Activated naive CD4-positive, alpha-beta T cell treated with anti-CD3 and anti-CD28 coated beads for 36 hours (primary cell): ENCODE measurements at regions of chr19 and their contacts with region 1.

Region 1: DNA sequence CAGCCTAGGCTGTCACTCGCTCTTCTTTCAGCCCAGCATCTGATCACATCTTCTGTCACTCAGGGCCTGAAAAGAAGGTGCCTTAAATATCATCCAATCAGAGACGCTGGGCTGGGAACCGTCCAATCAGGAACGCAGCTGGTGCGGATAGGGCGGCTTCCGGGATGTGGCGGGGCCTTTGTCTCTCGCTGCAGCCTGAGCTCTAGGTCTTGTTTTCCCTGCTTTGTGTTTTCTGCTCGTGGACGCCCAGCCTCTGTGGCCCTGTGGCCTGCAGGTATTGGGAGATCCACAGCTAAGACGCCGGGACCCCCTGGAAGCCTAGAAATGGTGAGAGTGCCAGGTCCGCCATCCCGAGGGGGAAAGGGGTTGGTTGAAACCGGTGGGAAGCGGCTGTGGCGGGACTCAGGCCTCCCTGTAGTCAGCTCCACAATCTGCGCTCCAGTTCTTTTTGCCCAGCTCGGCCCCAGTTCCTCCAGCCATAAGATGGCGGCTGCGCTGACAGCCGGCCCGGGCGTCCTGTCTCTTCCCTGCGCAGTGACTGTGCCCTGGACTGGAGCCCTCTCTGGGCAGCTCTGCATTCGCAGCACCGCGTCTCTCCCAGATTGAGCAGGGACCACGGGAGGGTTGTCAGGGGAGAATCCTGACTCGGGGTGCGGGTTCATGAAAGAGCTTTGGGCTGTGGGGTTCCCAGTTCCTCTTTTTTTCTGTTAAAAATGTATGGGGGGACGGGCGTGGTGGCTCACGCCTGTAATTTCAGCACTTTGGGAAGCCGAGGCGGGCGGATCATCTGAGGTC is at the start of gene ZNF85:
- DNase-seq: peak; percentile 96
- H3K4me3 Mint-ChIP-seq: peak within 1 kb of the TSS; percentile 97
- H3K27ac Mint-ChIP-seq: peak within 1 kb of the TSS; percentile 94
- H3K4me1 Mint-ChIP-seq: peaks cover 17% of the 10 kb centered on the region
- H3K27me3 Mint-ChIP-seq: no peaks in the 10 kb centered on the region
- total RNA-seq, gene ZNF85: 12.8 to 15.1 TPM

Region 2: GRCh38 chr19:20039203-20039723 is 884.0 kb before region 1 on chr19 and contains the start of gene ZNF682:
- CTCF ChIA-PET with region 1: no interaction called
- intact Hi-C with region 1: loop called (anchors 5 kb)
- DNase-seq: peak; percentile 98
- H3K4me3 Mint-ChIP-seq: peak within 1 kb of the TSS; percentile 94
- H3K27ac Mint-ChIP-seq: peak within 1 kb of the TSS; percentile 90
- H3K4me1 Mint-ChIP-seq: peaks cover 15% of the 10 kb centered on the region
- H3K27me3 Mint-ChIP-seq: no peaks in the 10 kb centered on the region
- total RNA-seq, gene ZNF682: 8.1 to 8.9 TPM

Region 3: GRCh38 chr19:20423381-20424197 is 499.7 kb before region 1 on chr19:
- CTCF ChIA-PET with region 1: no interaction called
- intact Hi-C with region 1: loop called (anchors 2 kb)
- DNase-seq: peak; percentile 59
- H3K4me3 Mint-ChIP-seq: peak overlapping the region; percentile 94
- H3K27ac Mint-ChIP-seq: peak overlapping the region; percentile 98
- H3K4me1 Mint-ChIP-seq: peaks cover 10% of the 10 kb centered on the region
- H3K27me3 Mint-ChIP-seq: no peaks in the 10 kb centered on the region

Region 4: DNA sequence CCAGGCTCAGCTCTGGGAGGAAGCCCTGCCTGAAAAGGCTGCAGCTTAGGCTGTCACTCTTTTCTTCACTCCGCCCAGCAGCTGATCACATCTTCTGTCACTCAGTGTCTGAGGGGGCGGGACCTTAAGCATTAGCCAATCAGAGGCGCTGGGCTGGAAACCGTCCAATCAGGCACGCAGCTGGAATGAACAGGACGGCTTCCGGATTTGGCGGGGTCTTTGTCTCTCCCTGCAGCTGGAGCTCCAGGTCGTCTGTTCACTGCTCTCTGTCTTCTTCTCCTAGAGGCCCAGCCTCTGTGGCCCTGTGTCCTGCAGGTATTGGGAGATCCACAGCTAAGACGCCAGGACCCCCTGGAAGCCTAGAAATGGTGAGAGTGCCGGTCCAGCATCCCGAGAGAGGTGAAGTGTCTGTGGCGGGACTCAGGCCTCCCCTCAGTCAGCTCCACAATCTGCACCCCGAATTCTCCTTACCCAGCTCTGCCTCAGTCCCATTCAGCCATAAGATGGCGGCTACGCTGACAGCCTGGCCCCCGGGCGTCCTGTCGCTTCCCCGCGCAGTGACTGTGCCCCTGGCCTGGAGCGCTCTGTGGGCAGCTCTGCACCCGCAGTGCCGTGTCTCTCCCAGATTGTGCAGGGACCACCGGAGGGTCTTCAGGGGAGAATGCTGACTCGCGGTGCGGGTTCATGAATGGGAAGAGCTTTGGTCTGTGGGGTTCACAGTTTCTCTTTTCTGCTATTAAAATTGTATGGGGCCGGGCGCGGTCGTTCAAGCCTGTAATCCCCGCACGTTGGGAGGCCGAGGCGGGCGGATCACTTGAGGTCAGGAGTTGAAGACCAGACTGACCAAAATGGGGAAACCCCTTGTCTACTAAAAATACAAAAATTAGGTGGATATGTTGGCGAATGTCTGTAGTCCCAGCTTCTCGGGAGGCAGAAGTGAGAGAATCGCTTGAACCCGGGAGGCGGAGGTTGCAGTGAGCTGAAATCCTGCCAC is 146.9 kb before region 1 on chr19 and contains the start of gene ZNF66:
- CTCF ChIA-PET with region 1: interaction called, 3 read pairs
- intact Hi-C with region 1: loop called (anchors 1 kb)
- DNase-seq: peak; percentile 98
- H3K4me3 Mint-ChIP-seq: peak within 1 kb of the TSS; percentile 100
- H3K27ac Mint-ChIP-seq: peak within 1 kb of the TSS; percentile 95
- H3K4me1 Mint-ChIP-seq: peaks cover 18% of the 10 kb centered on the region
- H3K27me3 Mint-ChIP-seq: no peaks in the 10 kb centered on the region
- total RNA-seq, gene ZNF66: 3.9 to 4.9 TPM

Region 5: GRCh38 chr19:20879501-20879900 is 43.8 kb before region 1 on chr19:
- CTCF ChIA-PET with region 1: no interaction called
- intact Hi-C with region 1: no loop called
- DNase-seq: no peak
- H3K4me3 Mint-ChIP-seq: no peak overlapping the region
- H3K27ac Mint-ChIP-seq: no peak overlapping the region
- H3K4me1 Mint-ChIP-seq: no peaks in the 10 kb centered on the region
- H3K27me3 Mint-ChIP-seq: peaks cover 7% of the 10 kb centered on the region

Region 6: DNA sequence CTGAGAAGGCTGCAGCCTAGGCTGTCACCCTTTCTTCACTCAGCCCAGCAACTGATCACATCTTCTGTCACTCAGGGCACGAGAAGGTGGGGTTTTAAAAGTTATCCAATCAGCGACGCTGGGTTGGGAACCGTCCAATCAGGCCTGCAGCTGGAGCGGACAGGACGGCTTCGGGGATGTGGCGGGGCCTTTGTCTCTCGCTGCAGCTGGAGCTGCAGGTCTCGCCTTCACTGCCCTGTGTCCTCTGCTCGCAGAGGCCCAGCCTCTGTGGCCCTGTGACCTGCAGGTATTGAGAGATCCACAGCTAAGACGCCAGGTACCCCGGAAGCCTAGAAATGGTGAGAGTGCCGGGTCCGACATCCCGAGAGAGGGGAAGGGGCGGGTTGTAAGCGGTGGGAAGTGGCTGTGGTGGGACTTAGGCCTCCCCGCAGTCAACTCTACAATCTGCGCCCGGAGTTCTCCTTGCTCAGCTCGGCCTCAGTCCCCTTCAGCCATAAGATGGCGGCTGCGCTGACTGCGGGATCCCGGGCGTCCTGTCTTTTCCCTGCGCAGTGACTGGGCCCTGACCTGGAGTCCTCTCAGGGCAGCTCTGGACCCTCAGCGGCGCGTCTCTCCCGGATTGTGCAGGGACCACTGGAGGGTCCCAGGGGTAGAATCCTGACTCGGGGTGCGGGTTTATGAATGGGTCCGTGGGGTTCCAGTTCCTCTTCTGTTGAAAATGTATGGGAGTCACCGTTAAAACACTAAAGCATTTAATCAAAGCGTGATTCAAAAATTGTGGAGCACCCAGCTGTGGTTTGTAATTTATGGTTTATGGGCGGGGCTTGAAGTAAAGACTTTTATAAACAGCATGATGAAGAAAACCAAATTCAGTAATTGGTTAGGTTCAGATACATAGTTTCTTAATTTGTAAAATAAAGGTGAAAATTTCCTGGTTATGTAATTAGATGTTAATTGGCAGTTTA is 159.0 kb after region 1 on chr19 and contains the start of gene ZNF714:
- CTCF ChIA-PET with region 1: no interaction called
- intact Hi-C with region 1: loop called (anchors 2 kb)
- DNase-seq: peak; percentile 93
- H3K4me3 Mint-ChIP-seq: peak within 1 kb of the TSS; percentile 98
- H3K27ac Mint-ChIP-seq: peak within 1 kb of the TSS; percentile 95
- H3K4me1 Mint-ChIP-seq: peaks cover 29% of the 10 kb centered on the region
- H3K27me3 Mint-ChIP-seq: no peaks in the 10 kb centered on the region
- total RNA-seq, gene ZNF714: 21.1 to 23.1 TPM

Region 7: DNA sequence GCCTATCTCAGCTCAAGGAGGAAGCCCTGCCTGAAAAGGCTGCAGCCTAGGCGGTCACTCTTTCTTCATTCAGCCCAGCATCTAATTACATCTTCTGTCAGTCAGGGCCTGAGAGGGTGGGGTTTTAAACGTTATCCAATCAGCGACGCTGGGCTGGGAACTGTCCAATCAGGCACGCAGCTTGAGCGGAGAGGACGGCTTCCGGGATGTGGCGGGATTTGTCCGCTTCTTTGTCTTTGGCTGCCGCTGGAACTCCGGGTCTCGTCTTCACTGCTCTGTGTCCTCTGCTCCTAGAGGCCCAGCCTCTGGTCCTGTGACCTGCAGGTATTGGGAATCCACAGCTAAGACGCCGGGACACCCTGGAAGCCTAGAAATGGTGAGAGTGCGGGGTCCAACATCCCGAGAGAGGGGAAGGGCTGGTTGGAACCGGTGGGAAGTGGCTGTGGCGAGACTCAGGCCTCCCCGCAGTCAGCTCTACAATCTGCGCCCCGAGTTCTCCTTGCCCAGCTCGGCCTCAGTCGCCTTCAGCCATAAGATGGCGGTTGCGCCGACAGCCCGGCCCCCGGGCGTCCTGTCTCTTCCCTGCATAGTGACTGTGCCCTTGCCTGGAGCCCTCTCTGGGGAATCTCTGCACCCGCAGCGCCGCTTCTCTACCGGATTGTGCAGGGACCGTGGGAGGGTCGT is 435.6 kb after region 1 on chr19 and contains the start of gene ZNF738:
- CTCF ChIA-PET with region 1: no interaction called
- intact Hi-C with region 1: loop called (anchors 2 kb)
- DNase-seq: peak; percentile 93
- H3K4me3 Mint-ChIP-seq: peak within 1 kb of the TSS; percentile 99
- H3K27ac Mint-ChIP-seq: peak within 1 kb of the TSS; percentile 93
- H3K4me1 Mint-ChIP-seq: peaks cover 8% of the 10 kb centered on the region
- H3K27me3 Mint-ChIP-seq: no peaks in the 10 kb centered on the region
- total RNA-seq, gene ZNF738: 16.6 to 17.1 TPM